ENCODE measurements at regions of chr3 and their contacts with region 1.

Region 1: DNA sequence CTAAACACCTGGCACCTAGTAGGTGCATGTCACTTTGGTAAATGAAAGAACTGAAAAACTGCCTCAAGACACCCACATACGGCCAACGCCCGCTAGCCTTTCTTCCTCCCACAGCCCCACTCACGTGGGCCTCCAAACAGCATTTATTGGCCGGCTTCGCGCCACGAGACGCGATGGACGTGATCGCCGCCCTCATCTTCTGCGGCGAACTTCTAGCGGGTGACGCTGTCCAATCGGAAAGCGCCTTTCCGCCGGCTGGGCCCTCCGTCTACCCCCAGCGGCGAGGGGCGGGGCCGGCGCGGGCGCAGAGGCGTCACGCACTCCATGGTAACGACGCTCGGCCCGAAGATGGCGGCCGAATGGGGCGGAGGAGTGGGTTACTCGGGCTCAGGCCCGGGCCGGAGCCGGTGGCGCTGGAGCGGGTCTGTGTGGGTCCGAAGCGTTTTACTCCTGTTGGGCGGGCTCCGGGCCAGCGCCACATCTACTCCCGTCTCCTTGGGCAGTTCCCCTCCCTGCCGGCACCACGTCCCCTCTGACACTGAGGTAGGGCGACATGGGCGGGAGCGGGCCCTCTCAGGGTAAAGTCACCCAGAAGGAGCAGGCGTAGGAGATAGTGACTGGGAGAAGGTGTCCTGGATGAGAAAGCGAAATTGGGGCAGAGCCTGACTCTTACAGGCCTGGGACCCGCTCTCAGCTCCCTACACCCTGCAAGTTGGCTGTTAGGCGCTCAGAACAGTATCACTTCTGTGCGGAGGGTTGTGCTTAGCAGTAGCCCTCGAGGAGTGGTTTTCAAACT is at the start of gene LMLN:
- DNase-seq: peak; percentile 99
- H3K4me3 Mint-ChIP-seq: peak within 1 kb of the TSS; percentile 96
- H3K27ac Mint-ChIP-seq: peak within 1 kb of the TSS; percentile 96
- H3K4me1 Mint-ChIP-seq: peaks cover 42% of the 10 kb centered on the region
- H3K27me3 Mint-ChIP-seq: peaks cover 5% of the 10 kb centered on the region
- total RNA-seq, gene LMLN: 5.5 and 5.9 TPM in 2 replicates

Region 2: DNA sequence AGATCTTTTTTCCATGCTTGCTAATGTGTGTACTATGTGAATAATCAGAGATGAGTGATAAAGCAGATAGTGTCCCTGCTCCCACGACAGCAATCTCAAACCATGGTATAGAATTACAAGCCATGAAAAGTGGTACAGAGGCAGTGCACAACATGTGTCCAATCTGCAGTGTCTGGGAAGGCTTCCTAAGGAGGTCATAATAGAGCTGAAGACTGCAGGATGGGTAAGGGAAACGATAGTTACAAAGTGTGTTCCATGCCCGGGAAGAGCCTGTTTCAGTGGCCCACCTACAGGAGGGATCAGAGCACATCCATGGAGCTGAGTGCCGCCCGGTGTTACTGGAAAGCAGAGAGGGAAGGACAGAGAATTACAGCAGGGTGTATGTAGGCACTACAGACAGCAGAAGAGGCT is 1171.6 kb before region 1 on chr3:
- intact Hi-C with region 1: no loop called
- DNase-seq: no peak
- H3K4me3 Mint-ChIP-seq: no peak overlapping the region
- H3K27ac Mint-ChIP-seq: peak overlapping the region; percentile 23
- H3K4me1 Mint-ChIP-seq: peaks cover 8% of the 10 kb centered on the region
- H3K27me3 Mint-ChIP-seq: no peaks in the 10 kb centered on the region

Region 3: GRCh38 chr3:197736491-197737318 is 223.4 kb before region 1 on chr3 and contains the start of gene RUBCN:
- intact Hi-C with region 1: loop called (anchors 10 kb)
- DNase-seq: peak; percentile 98
- H3K4me3 Mint-ChIP-seq: peak within 1 kb of the TSS; percentile 94
- H3K27ac Mint-ChIP-seq: peak within 1 kb of the TSS; percentile 97
- H3K4me1 Mint-ChIP-seq: peaks cover 30% of the 10 kb centered on the region
- H3K27me3 Mint-ChIP-seq: no peaks in the 10 kb centered on the region
- total RNA-seq, gene RUBCN: 38.8 and 41.0 TPM in 2 replicates

Region 4: DNA sequence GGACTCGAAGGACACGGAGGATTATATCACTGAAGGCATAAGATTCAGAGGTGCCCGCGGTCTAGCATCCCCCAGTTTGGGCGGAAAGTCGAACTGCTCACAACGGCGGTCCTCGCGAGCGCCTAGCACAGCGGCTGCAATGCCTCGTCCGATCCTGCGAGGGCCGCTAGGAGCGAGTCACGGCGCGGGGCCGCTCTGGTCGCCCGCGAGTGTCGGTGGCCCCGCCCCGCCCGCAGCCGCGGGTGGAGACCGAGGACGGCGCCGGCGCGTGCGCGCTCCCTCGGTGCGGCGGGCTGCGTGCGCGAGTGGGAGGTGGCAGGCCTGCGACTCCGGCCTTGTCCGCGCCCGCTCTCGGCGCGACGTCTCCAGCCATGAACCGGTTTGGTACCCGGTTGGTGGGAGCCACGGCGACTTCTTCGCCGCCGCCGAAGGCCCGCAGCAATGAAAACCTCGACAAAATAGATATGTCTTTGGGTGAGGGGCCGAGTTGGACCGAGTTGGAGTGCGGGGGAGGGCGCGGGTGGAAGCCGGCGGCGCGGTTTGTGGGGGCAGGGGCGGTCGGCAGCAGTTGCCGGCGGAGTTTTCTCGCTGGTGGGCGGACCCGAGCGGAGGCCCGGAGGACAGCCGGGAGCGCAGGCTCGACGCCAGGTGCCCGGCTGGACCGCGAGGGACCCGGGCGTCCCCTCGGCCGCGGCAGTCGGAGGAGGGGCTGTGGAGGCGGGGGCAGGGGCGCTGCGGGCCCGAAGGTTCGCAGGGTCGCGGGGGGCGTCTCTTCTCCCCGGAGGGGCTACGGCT is 210.3 kb before region 1 on chr3 and contains the start of gene FYTTD1:
- intact Hi-C with region 1: loop called (anchors 5 kb)
- DNase-seq: peak; percentile 97
- H3K4me3 Mint-ChIP-seq: peak within 1 kb of the TSS; percentile 92
- H3K27ac Mint-ChIP-seq: peak within 1 kb of the TSS; percentile 96
- H3K4me1 Mint-ChIP-seq: peaks cover 31% of the 10 kb centered on the region
- H3K27me3 Mint-ChIP-seq: peaks cover 4% of the 10 kb centered on the region
- total RNA-seq, gene FYTTD1: 53.2 and 56.8 TPM in 2 replicates

Region 5: DNA sequence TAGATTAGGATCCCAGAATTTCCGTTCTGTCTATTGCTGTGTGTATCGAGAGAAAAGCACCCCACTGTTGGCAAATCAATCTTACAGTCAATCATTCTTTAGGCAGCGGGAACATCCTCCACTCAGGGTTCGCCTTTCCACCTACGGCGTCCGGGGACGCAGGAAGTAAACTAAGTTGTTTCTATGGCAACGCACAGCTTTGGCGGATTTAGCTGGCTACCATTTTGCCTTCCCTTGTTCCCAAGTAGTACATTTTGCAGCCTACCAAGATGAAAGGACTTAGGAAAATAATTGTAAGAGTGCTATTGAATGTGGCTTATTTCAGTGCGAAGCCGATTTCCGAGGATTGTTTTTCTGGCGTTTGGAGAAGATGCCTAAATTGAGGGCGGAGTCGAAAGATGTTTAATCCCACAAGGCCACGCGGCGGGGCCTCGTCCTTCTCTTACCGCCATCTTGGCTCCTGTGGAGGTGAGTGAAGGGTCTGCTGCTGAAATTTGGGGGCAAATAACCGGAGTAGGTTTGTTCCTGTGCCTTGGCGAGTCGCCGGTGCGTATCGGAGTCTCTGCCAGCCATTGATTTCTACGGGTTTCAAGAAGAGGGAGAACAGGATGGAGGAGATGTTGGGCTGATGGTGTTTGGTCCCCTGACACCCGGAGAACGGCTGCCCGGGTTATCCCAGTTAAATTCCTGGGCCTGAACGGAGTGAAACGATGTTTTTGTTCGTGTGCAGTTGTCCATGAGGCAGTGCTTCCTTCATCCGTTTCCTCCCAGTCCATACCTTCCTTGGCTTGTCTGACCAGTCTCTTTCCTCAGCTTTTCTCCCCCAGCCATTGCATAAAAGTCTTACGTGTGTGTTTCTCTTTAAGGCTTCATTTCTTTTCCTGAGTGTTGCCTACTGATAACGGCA is 10.1 kb before region 1 on chr3 and contains the start of gene RPL35A:
- intact Hi-C with region 1: loop called (anchors 1 kb)
- DNase-seq: peak; percentile 95
- H3K4me3 Mint-ChIP-seq: peak within 1 kb of the TSS; percentile 99
- H3K27ac Mint-ChIP-seq: peak within 1 kb of the TSS; percentile 99
- H3K4me1 Mint-ChIP-seq: peaks cover 34% of the 10 kb centered on the region
- H3K27me3 Mint-ChIP-seq: peaks cover 2% of the 10 kb centered on the region
- total RNA-seq, gene RPL35A: 1,350 and 1,372 TPM in 2 replicates

Region 6: DNA sequence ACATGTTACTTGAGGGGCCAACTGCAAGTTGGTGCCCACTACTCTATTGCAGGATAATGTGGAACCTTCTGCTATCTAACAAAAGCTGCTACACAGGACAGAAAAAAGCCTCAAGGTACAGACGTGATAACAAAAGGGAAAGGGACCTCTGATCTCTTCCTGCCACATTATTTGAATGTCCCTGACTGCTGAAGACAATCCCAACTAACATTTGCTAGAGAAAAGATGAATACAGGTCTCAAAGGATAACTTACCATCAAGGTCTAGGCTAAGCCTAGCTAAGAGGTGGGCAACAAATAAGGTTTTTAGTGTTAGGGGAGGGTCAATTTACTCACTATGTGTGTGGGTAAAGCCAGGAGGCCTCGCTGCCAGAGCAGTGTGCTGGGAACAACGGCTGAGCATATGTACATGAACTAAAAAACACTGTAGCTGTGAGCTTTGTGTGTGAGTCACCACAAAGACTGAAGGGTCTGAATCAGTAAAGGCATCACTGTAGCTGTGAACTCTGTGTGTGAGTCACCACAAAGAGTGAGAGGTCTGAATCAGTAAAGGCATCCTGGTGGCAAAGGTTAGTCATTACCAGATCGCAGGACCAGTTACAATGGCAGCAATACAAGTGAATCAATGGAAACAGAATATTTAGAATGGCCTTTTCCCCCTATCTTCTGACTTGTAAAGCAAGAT is 111.6 kb after region 1 on chr3:
- intact Hi-C with region 1: loop called (anchors 2 kb)
- DNase-seq: peak; percentile 78
- H3K4me3 Mint-ChIP-seq: peak overlapping the region; percentile 6
- H3K27ac Mint-ChIP-seq: peak overlapping the region; percentile 90
- H3K4me1 Mint-ChIP-seq: peaks cover 19% of the 10 kb centered on the region
- H3K27me3 Mint-ChIP-seq: peaks cover 28% of the 10 kb centered on the region

Region 7: GRCh38 chr3:198080521-198081280 is 120.6 kb after region 1 on chr3:
- intact Hi-C with region 1: loop called (anchors 1 kb)
- DNase-seq: peak; percentile 95
- H3K4me3 Mint-ChIP-seq: peak overlapping the region; percentile 87
- H3K27ac Mint-ChIP-seq: peak overlapping the region; percentile 89
- H3K4me1 Mint-ChIP-seq: peaks cover 9% of the 10 kb centered on the region
- H3K27me3 Mint-ChIP-seq: peaks cover 57% of the 10 kb centered on the region

Measured in activated CD4-positive, alpha-beta T cell treated with anti-CD3 and anti-CD28 coated beads, Interleukin-2, amount 10 ng/mL, durations not matched to agents 24 days and 14 days (primary cell).